Gastrocnemius medialis (tissue), 4 donors: ENCODE measurements at regions of chr10 and their contacts with region 1.

Region 1: DNA sequence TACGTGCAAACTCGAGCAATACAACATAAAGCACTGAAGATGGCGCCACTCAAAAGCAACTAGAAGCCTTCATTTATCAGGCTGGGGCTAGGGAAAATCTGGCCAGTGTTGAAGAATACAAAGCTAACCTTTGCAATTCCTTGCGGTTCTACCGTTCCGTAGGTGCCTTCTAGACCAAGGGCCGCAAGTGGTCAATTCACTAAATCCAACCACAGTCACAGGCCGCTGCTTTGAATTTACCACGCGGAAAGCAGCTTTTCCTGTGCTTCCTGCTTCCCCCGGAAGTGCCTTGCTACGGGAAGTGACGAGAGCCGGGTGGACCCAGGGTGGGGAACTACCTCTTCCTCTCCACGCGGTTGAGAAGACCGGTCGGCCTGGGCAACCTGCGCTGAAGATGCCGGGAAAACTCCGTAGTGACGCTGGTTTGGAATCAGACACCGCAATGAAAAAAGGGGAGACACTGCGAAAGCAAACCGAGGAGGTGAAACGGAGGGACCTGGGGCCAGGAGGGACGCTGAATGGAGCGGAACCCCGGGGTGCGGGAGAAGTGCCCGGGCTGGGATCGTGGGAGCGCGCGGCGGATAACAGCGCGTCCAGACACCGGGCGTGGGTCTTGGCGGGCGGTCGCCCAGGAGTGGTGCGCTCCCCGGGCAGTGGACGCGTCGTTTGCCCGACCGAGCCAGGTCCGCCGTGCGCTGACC is at the start of gene DDX21:
- DNase-seq: peak; percentile 82 to 83
- ATAC-seq: peak; percentile 97
- H3K4me3 ChIP-seq: peak within 1 kb of the TSS; percentile 96 to 98 (median 98)
- H3K27ac ChIP-seq: peak within 1 kb of the TSS; percentile 92 to 98 (median 96)
- H3K4me1 ChIP-seq: peaks cover 18 to 24% of the 10 kb centered on the region in 2 donors
- H3K27me3 ChIP-seq: no peaks in the 10 kb centered on the region
- CTCF ChIP-seq: peak; percentile 25 to 63 (median 47)
- POLR2A ChIP-seq: peak; percentile 78 to 84
- total RNA-seq, gene DDX21: 44.4 to 66.8 (median 53.7) TPM

Region 2: GRCh38 chr10:68526626-68527307 is 429.2 kb before region 1 on chr10:
- in situ Hi-C with region 1: no loop called
- intact Hi-C with region 1: loop called (anchors 5 kb)
- DNase-seq: no peak
- ATAC-seq: peak; percentile 61 to 74
- H3K4me3 ChIP-seq: peak overlapping the region; percentile 83 to 100 (median 93)
- H3K27ac ChIP-seq: peak overlapping the region; percentile 88 to 100 (median 99)
- H3K4me1 ChIP-seq: peaks cover 4 to 8% of the 10 kb centered on the region in 2 donors
- H3K27me3 ChIP-seq: no peaks in the 10 kb centered on the region
- CTCF ChIP-seq: no peak
- POLR2A ChIP-seq: no peak

Region 3: DNA sequence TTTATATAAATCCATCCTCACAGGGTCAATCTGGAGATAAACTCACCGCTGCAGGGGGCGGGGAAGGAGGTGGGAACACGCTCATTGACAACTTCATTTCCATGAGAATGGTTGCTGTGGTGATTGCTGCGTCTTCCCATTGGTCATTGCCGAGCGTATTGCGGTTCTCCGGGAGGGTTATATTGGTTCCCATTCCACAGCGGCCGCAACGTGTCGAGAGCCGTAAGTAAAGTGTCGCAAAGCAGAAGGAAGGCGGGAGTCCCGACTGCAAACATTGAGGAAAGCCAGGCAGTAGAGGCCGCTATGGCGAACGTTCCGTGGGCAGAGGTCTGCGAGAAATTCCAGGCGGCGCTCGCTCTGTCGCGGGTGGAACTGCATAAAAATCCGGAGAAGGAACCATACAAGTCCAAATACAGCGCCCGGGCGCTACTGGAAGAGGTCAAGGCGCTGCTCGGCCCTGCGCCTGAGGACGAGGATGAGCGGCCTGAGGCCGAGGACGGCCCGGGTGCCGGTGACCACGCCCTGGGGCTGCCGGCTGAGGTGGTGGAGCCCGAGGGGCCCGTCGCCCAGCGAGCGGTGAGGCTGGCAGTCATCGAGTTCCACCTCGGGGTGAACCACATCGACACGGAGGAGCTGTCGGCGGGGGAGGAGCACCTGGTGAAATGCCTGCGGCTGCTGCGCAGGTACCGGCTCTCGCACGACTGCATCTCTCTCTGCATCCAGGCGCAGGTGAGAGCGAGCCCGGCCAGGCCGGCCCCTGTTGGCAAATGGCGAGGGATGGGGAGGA is 32.7 kb after region 1 on chr10 and contains the start of gene KIFBP:
- in situ Hi-C with region 1: no loop called
- intact Hi-C with region 1: loop called (anchors 1 kb)
- DNase-seq: peak; percentile 88 to 92
- ATAC-seq: peak; percentile 98
- H3K4me3 ChIP-seq: peak within 1 kb of the TSS; percentile 90 to 92 (median 90)
- H3K27ac ChIP-seq: peak within 1 kb of the TSS; percentile 78 to 87 (median 84)
- H3K4me1 ChIP-seq: peaks cover 35 to 45% of the 10 kb centered on the region in 2 donors
- H3K27me3 ChIP-seq: no peaks in the 10 kb centered on the region
- CTCF ChIP-seq: peak in 4 of 5 experiments; percentile 17 to 60 (median 44)
- POLR2A ChIP-seq: peak; percentile 57 to 73
- total RNA-seq, gene KIFBP: 24.0 to 41.3 (median 33.9) TPM

Region 4: DNA sequence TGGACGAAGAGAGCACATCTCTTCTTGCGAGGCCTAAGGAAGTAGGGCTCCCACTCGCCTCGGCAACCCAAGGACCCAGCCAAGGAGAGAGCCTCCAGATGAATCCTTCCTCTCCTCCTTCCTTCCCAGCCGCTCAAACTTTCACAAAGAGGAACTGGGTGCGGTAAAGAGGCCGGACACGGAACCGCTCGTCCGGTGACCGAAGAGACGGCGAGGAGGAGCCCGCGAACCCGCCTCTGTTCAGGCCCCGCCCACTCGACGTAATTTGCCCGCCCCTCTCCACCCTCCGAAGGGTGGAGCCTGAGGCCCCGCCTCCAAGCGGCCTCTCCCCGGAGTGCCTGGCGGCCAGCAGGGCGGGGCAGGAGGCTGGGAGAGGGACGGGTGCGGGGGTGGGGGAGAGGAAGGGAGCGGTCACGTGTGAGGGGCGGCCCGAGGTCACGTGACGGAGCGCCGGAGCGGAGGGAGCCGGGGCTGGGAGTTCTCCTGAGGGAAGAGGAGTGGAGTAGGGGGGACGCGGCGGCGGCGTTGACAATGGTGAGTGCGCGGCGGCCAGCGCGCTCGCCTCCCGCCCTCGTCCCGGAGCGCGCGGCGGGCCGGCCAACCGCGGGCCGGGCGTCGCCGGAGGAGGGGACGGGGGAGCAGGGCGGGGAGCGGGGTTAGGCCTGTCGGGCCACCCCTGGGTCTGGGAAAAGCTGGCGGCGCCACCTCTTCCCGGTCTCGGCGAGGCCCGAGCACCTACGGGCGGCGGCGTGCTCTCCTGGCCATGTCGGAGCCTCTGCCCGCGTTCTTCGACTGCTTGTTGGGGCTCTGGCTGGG is 168.0 kb after region 1 on chr10 and contains the start of gene VPS26A:
- in situ Hi-C with region 1: no loop called
- intact Hi-C with region 1: loop called (anchors 1 kb)
- DNase-seq: peak; percentile 98 to 99
- ATAC-seq: peak; percentile 87 to 91
- H3K4me3 ChIP-seq: peak within 1 kb of the TSS; percentile 57 to 90 (median 85)
- H3K27ac ChIP-seq: peak within 1 kb of the TSS; percentile 91 to 97 (median 96)
- H3K4me1 ChIP-seq: peaks cover 18 to 20% of the 10 kb centered on the region in 2 donors
- H3K27me3 ChIP-seq: no peaks in the 10 kb centered on the region
- CTCF ChIP-seq: peak in 3 of 5 experiments; percentile 4 to 46 (median 27)
- POLR2A ChIP-seq: peak; percentile 95 to 96
- total RNA-seq, gene VPS26A: 21.0 to 31.1 (median 25.4) TPM

Region 5: GRCh38 chr10:69232252-69232651 is 276.3 kb after region 1 on chr10:
- in situ Hi-C with region 1: no loop called
- intact Hi-C with region 1: no loop called
- DNase-seq: no peak
- ATAC-seq: no peak
- H3K4me3 ChIP-seq: no peak overlapping the region
- H3K27ac ChIP-seq: no peak overlapping the region
- H3K4me1 ChIP-seq: no peaks in the 10 kb centered on the region
- H3K27me3 ChIP-seq: no peaks in the 10 kb centered on the region
- CTCF ChIP-seq: no peak
- POLR2A ChIP-seq: no peak